ENCODE measurements at regions of chr14 and their contacts with region 1.

Region 1: DNA sequence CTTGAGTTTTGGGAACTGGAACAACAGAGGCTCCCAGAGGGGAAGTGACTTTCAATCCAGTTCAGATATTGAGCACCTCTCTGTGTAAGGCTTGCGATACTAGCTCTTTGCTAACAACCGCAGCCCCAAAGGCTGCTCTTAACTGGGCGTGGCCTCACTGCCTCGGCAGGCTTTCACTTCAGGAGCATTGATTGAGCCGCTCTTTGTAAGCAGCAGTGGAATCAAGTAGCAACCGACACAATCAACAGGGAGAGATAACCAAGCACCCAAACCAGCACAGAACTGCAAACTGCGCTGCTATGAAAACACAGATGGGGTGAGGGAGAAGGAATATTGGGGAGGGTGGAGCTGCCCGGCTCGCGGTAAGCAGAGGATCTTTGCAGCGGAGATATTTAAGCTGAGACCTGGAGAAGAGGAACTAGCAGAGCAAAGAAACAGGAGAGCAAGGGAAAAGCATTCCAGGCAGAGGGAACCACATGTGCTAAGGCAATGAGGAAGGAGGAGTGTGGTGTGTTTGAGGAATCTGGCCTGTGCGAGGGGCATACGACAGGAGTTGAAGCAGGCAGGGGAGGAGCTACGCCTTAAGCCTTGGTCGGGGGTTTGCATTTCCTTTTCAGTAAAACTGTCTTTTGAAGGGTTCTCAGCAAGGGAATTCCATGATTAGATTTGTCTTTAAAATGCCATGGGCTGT is 17.3 kb upstream of the YY1 start:
- DNase-seq: peak; percentile 85
- H3K4me3 Mint-ChIP-seq: no peak overlapping the region
- H3K27ac Mint-ChIP-seq: no peak overlapping the region
- H3K4me1 Mint-ChIP-seq: peaks cover 11% of the 10 kb centered on the region
- H3K27me3 Mint-ChIP-seq: no peaks in the 10 kb centered on the region

Region 2: GRCh38 chr14:100234511-100234910 is 12.8 kb after region 1 on chr14:
- CTCF ChIA-PET with region 1: interaction called, 15 read pairs
- DNase-seq: peak; percentile 64
- H3K4me3 Mint-ChIP-seq: peak overlapping the region; percentile 28
- H3K27ac Mint-ChIP-seq: peak overlapping the region; percentile 87
- H3K4me1 Mint-ChIP-seq: peaks cover 60% of the 10 kb centered on the region
- H3K27me3 Mint-ChIP-seq: peaks cover 4% of the 10 kb centered on the region

Region 3: DNA sequence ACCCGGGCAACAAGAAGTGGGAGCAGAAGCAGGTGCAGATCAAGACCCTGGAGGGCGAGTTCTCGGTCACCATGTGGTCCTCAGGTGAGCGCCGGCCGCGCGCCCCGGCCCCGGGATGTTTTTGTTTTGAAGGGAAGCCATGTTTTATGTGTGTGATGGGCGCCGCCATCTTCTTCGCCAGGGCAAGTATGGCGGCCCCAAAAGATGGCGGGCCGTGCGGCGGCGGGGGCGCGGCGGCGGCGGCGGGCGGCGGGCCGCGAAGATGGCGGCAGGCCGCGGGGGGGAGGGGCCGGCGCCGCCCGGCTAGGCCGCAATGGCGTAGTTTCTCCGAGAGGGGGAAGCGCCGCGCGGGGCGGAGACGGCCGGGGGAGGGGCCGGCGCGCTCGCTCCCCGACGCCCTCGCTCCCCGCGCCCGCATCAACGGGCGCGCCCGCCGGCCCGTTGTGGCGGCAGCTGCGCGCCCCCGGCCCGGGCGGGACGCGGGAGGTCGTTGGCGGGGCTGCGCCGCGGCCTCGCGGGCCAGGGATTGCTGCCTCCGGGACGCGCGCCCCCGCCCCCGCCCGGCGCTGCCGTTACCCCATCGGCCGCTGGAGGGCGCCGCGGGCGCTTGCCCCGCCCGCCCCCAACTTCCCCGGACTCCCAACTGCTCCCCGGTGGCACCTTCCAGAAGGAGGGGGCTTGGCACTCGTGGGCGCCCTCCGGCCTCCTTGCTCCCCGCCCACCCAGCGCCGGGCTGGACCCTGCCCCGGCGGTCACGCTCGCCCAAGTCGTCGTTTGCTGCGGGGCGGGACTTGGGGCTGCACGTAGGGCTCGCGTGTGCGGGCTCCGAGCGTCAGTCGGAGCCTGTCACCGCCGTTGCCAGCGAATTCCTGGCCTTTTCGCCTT is 18.4 kb after region 1 on chr14:
- CTCF ChIA-PET with region 1: interaction called, 23 read pairs
- DNase-seq: peak; percentile 87
- H3K4me3 Mint-ChIP-seq: peak overlapping the region; percentile 92
- H3K27ac Mint-ChIP-seq: peak overlapping the region; percentile 93
- H3K4me1 Mint-ChIP-seq: peaks cover 61% of the 10 kb centered on the region
- H3K27me3 Mint-ChIP-seq: peaks cover 4% of the 10 kb centered on the region